ENCODE measurements at regions of chr15 and their contacts with region 1.

Region 1: GRCh38 chr15:65384895-65385858 is 7.4 kb upstream of the IGDCC3 start:
- DNase-seq: peak; percentile 88
- ATAC-seq: peak; percentile 95

Region 2: GRCh38 chr15:65318870-65319356 is 66.3 kb before region 1 on chr15:
- intact Hi-C with region 1: loop called (anchors 1 to 2 kb)
- DNase-seq: peak; percentile 77
- ATAC-seq: peak; percentile 96 to 97

Region 3: GRCh38 chr15:65344918-65345275 is 40.3 kb before region 1 on chr15:
- intact Hi-C with region 1: no loop called
- DNase-seq: no peak
- ATAC-seq: no peak

Region 4: DNA sequence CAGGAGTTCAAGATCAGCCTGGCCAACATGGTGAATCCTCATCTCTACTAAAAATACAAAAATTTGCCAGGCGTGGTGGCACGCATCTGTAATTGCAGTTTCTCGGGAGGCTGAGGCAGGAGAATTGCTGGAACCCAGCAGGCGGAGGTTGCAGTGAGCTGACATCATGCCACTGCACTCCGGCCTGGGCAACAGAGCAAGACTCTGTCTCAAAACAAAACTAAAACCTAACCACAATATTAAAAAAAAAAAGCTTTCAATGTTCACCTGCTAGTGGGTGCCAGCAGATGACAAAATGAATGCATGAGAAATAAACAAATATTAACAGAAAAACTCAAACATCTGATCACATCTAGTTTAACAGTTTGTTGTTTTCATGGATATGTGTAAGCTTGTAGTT is 245.6 kb after region 1 on chr15:
- intact Hi-C with region 1: no loop called
- DNase-seq: no peak
- ATAC-seq: no peak